Dendritic cell treated with granulocyte-macrophage colony-stimulating factor and Interleukin-4, amounts not matched to agents 40 ng/mL and 50 ng/mL, for 4 days (primary cell): ENCODE measurements at regions of chr18 and their contacts with region 1.

Region 1: DNA sequence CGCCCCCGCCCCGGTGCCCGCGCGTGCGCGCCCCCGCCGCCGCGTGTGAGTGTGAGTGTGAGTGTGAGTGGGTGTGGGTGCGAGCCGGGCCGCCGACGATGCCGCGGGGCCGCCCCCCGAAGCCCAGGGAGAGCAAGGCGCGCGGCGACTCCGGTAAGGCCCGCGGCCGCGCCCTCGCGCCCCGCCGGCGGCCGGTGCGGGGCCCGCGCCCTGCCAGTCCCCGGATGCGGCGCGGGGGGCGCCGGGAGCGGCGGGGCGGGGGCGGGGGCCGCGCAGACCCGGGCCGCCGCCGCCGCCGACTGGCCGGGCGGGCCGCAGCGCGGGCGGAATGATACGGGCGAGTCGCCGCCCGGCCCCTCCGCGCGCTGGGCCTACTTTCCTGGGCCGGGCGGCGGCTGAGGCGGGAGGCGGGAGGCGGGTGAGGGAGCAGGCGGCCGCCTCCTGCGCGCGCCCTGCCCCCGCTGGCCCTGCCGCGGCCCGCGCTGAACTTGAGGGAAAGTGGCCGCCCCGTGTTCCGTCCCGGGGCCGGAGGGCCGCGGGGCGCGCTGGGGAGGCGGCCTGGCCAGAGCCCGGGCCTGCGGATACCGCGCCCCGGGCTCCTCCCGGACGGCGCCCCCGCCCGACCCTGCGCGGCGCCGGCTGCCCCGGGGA is at the start of gene ZNF236:
- H3K4me3 Mint-ChIP-seq: peak within 1 kb of the TSS; percentile 87
- H3K27ac Mint-ChIP-seq: peak within 1 kb of the TSS; percentile 92
- H3K4me1 Mint-ChIP-seq: peaks cover 53% of the 10 kb centered on the region
- H3K27me3 Mint-ChIP-seq: no peaks in the 10 kb centered on the region

Region 2: DNA sequence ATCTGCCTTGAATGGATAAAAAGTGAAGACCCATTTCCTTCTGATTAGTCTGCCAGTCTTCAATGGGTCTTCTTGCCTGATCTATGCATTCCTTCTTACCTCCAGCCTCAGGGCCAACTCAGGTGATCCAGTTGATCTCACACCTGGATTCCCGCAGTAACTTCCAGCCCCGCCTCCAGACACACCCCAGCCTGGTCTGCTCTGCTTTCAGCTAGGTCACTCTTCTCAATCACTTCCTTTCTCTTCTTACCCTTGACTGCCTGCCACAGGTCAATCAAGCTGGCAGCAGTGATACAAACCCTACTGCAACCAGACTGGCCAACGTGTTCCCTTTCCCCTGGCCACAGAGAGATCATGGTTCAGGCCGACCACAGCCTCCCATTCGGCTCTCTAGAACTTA is 591.2 kb before region 1 on chr18:
- intact Hi-C with region 1: no loop called
- H3K4me3 Mint-ChIP-seq: no peak overlapping the region
- H3K27ac Mint-ChIP-seq: no peak overlapping the region
- H3K4me1 Mint-ChIP-seq: no peaks in the 10 kb centered on the region
- H3K27me3 Mint-ChIP-seq: peaks cover 3% of the 10 kb centered on the region

Region 3: GRCh38 chr18:76803814-76804213 is 18.8 kb before region 1 on chr18:
- intact Hi-C with region 1: loop called (anchors 1 kb)
- H3K4me3 Mint-ChIP-seq: no peak overlapping the region
- H3K27ac Mint-ChIP-seq: no peak overlapping the region
- H3K4me1 Mint-ChIP-seq: peaks cover 16% of the 10 kb centered on the region
- H3K27me3 Mint-ChIP-seq: peaks cover 23% of the 10 kb centered on the region

Region 4: DNA sequence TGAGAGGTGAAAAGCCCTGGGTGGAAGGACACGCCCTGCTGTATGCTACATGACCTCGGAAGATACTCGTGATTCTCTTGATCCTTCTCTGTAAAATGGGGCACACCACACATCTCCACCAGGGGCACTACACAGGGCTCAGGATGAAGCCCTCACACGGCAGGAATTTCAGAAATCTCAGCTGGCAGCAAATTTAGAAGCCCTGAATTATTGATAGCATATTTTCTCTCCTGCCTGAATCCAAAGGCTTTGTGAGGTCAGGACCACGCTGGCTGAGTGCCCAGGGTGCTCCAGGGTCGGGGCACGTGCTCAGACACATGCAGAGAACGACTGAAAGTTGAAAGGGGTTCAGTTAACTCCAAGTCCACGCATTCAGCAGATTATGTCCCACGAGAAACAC is 384.9 kb after region 1 on chr18:
- intact Hi-C with region 1: loop called (anchors 10 kb)
- H3K4me3 Mint-ChIP-seq: no peak overlapping the region
- H3K27ac Mint-ChIP-seq: peak overlapping the region; percentile 63
- H3K4me1 Mint-ChIP-seq: peaks cover 53% of the 10 kb centered on the region
- H3K27me3 Mint-ChIP-seq: peaks cover 5% of the 10 kb centered on the region